Dendritic cell treated with granulocyte-macrophage colony-stimulating factor and Interleukin-4, amounts not matched to agents 40 ng/mL and 50 ng/mL, for 4 days (primary cell): ENCODE measurements at regions of chr18 and their contacts with region 1.

Region 1: GRCh38 chr18:58231930-58232329 is 187.9 kb downstream of the NEDD4L start:
- H3K4me3 Mint-ChIP-seq: no peak overlapping the region
- H3K27ac Mint-ChIP-seq: peak overlapping the region; percentile 71
- H3K4me1 Mint-ChIP-seq: peaks cover 41% of the 10 kb centered on the region
- H3K27me3 Mint-ChIP-seq: peaks cover 13% of the 10 kb centered on the region

Region 2: GRCh38 chr18:58180738-58181353 is 51.1 kb before region 1 on chr18:
- intact Hi-C with region 1: loop called (anchors 5 kb)
- H3K4me3 Mint-ChIP-seq: no peak overlapping the region
- H3K27ac Mint-ChIP-seq: no peak overlapping the region
- H3K4me1 Mint-ChIP-seq: no peaks in the 10 kb centered on the region
- H3K27me3 Mint-ChIP-seq: peaks cover 12% of the 10 kb centered on the region

Region 3: DNA sequence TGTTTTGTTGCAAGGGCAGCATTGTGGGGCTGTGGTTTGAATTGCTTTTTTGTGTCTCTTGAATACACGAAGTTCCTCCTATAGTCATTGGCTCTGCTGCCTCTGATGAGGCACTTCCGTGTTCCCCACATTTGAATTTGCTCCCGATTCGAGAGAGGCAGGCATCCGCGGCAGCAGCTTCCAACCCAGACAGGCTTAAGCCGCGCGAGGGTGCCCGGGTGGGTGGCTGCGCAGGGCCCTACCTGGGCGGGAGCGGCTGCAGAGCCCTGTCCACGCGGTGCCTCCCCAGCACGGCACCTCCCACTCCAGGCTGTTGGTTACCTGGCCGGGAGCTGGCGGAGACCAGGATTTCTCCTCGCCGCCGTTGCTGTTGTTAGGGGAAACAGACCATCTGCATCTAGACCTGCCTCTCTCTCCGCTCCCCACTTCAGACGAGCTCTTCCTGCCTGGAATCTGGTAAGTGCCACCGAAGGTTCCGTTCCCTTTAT is 36.6 kb before region 1 on chr18:
- intact Hi-C with region 1: loop called (anchors 5 kb)
- H3K4me3 Mint-ChIP-seq: peak overlapping the region; percentile 81
- H3K27ac Mint-ChIP-seq: peak overlapping the region; percentile 76
- H3K4me1 Mint-ChIP-seq: peaks cover 27% of the 10 kb centered on the region
- H3K27me3 Mint-ChIP-seq: peaks cover 40% of the 10 kb centered on the region

Region 4: GRCh38 chr18:58915006-58915799 is 683.3 kb after region 1 on chr18:
- intact Hi-C with region 1: no loop called
- H3K4me3 Mint-ChIP-seq: no peak overlapping the region
- H3K27ac Mint-ChIP-seq: no peak overlapping the region
- H3K4me1 Mint-ChIP-seq: no peaks in the 10 kb centered on the region
- H3K27me3 Mint-ChIP-seq: no peaks in the 10 kb centered on the region